Cardiac septum (tissue), 1 donor: ENCODE measurements at regions of chr4 and their contacts with region 1.

Region 1: GRCh38 chr4:79576429-79576753 is 168.4 kb upstream of the GK2 start:
- DNase-seq: no peak

Region 2: DNA sequence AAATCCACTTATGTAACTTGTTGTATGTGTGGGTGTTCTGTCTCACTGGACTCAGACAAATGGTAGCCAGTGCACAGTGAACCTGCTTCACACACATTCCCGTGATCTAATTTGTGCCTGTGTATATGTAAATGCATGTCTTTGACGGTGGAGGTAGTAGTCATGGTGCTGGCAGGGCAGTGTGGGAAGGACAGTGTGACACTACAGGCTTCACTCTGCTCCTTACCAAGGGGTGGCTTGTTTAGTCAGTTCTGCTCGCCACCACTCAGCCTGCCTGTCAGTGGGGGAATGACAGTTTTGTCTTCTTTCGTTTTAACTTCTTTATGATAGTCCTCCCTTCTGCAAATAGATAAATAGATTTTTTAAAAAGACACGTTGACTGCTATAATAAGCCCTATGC is 619.4 kb before region 1 on chr4:
- intact Hi-C with region 1: loop called (anchors 5 kb)
- DNase-seq: no peak

Region 3: DNA sequence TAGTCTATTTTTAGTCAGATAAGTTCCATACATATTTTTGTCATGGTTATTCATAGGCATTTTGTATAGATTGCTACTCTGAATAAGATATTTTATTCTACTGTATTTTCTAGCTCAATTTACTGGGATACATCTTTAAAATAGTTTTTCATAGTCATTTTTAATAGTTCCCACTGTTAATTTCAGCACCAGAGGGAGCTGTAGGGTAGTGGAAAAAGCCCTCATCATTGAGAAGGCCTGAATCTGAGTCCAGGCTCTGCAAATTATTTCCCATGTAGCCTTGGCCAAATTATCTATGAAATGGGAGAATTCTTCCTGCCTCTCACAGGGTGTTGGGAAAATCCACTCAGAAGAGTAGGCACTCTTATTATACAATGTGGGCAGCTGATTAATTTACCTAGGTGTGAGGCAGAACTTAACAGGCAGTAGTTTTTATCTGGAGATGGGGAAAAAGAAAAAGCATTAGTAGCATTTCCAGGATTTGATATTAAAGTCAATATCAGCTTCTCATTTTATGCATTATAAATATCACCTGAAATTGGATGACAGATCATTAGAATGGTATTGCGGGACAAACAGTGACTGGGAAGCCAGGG is 534.2 kb before region 1 on chr4:
- intact Hi-C with region 1: loop called (anchors 2 kb)
- DNase-seq: no peak